Caco-2 (cell line): ENCODE measurements at regions of chr6 and their contacts with region 1.

Region 1: GRCh38 chr6:125153391-125154117 is at the start of gene TPD52L1:
- DNase-seq: peak; percentile 85
- H3K4me3 ChIP-seq: peak within 1 kb of the TSS; percentile 78
- H3K4me3 Mint-ChIP-seq: peak within 1 kb of the TSS; percentile 81
- H3K27ac Mint-ChIP-seq: peak within 1 kb of the TSS; percentile 42
- H3K4me1 ChIP-seq: no peaks in the 10 kb centered on the region
- H3K4me1 Mint-ChIP-seq: peaks cover 6% of the 10 kb centered on the region
- H3K27me3 ChIP-seq: no peaks in the 10 kb centered on the region
- H3K27me3 Mint-ChIP-seq: peaks cover 8% of the 10 kb centered on the region
- CTCF ChIP-seq: peak; percentile 79 to 97
- total RNA-seq, gene TPD52L1: 60.1 and 83.9 TPM in 2 replicates

Region 2: DNA sequence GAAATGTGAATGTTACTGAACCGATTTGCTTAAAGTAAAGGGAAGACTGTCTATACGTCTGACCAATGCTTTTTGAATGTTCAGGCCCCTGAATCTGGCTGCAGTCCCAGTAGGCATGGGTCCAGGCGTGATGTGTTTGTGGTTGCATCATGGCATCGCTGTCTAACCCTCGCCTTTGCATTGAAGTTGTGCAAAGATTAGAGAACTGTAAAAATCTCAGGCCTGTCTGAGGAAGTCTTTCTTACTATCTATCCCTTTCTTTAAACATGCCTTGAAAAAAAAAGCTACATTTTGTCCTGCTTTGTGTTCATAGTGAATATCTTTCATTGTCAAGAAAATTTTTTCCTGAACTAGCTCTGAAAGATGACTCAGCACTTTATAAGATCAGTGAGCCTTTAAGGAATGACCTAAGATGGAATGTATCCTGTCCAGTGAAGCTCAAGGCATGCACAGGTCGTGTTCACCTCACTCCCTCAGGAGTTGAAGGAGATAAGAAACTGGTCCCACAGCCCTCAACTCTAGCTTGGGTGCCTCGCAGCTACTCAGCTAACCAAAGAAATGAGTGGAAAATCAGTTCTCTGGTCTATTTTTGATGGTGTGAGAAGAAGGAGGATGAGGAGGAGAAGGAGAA is 48.5 kb after region 1 on chr6:
- CTCF ChIA-PET with region 1: interaction called, 7 read pairs
- POLR2A ChIA-PET with region 1: interaction called, 4 read pairs
- intact Hi-C with region 1: loop called (anchors 2 kb)
- DNase-seq: peak; percentile 59 to 81
- H3K4me3 ChIP-seq: no peak overlapping the region
- H3K4me3 Mint-ChIP-seq: peak overlapping the region; percentile 25
- H3K27ac Mint-ChIP-seq: peak overlapping the region; percentile 55
- H3K4me1 ChIP-seq: peaks cover 36% of the 10 kb centered on the region
- H3K4me1 Mint-ChIP-seq: peaks cover 25% of the 10 kb centered on the region
- H3K27me3 ChIP-seq: no peaks in the 10 kb centered on the region
- H3K27me3 Mint-ChIP-seq: no peaks in the 10 kb centered on the region
- CTCF ChIP-seq: no peak

Region 3: DNA sequence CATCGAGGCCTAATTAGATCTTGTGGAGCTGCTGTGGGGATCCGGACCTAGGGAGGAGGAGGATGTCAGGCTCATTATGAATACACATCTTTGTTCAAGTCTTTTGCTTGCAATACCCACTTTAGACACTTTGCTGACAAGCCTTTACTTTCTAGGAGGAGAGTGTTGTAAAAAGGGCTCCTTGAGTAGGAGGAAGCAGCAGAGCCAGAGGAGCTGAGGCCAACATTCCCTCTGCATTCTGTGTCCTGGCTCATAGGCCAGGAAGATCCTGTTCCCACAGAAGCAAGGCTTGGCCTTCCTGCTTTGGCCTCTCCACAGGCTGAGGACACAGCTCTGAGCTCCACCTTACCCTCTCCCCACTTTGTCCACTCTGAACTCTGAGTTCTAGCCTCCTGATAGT is 67.2 kb after region 1 on chr6:
- CTCF ChIA-PET with region 1: interaction called, 3 read pairs
- POLR2A ChIA-PET with region 1: no interaction called
- intact Hi-C with region 1: loop called (anchors 5 kb)
- DNase-seq: no peak
- H3K4me3 ChIP-seq: peak overlapping the region; percentile 4
- H3K4me3 Mint-ChIP-seq: peak overlapping the region; percentile 25
- H3K27ac Mint-ChIP-seq: no peak overlapping the region
- H3K4me1 ChIP-seq: peaks cover 24% of the 10 kb centered on the region
- H3K4me1 Mint-ChIP-seq: peaks cover 30% of the 10 kb centered on the region
- H3K27me3 ChIP-seq: no peaks in the 10 kb centered on the region
- H3K27me3 Mint-ChIP-seq: no peaks in the 10 kb centered on the region
- CTCF ChIP-seq: no peak

Region 4: DNA sequence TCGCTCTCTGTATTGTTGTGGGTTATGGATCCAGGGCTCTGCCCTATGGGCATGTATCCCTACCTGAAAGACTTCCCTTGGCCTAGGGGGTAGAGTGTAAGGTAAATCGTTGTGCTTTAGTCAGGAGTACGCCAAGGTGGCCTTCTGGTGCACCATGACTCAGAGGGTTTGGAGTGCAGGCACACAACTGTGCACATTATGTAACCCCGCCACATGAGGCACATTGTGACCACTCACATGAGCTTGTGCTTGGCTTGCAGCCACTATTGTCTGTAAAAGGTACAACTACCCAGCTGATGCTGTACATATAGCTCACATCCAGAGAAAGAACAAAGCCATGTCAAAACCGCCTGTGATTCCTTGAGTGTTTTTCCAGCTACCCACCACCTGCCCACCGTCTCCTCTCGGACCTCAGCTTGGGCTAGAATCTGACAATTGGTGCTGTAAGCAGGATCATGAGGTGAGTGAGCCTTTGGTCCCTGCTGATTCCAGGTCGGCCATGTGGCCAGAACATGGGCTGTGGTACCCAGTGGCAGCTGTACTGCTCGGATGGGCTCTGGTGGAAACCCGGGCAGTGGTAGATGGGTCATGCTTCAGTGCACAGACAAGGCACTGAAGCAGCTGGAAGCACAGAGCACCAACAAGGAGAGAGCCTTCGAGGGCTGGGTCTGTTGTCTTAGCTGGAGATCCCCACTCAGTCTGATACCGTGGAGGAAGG is 114.4 kb after region 1 on chr6:
- CTCF ChIA-PET with region 1: no interaction called
- POLR2A ChIA-PET with region 1: interaction called, 3 read pairs
- intact Hi-C with region 1: loop called (anchors 5 kb)
- DNase-seq: no peak
- H3K4me3 ChIP-seq: no peak overlapping the region
- H3K4me3 Mint-ChIP-seq: no peak overlapping the region
- H3K27ac Mint-ChIP-seq: no peak overlapping the region
- H3K4me1 ChIP-seq: no peaks in the 10 kb centered on the region
- H3K4me1 Mint-ChIP-seq: no peaks in the 10 kb centered on the region
- H3K27me3 ChIP-seq: no peaks in the 10 kb centered on the region
- H3K27me3 Mint-ChIP-seq: no peaks in the 10 kb centered on the region
- CTCF ChIP-seq: no peak

Region 5: DNA sequence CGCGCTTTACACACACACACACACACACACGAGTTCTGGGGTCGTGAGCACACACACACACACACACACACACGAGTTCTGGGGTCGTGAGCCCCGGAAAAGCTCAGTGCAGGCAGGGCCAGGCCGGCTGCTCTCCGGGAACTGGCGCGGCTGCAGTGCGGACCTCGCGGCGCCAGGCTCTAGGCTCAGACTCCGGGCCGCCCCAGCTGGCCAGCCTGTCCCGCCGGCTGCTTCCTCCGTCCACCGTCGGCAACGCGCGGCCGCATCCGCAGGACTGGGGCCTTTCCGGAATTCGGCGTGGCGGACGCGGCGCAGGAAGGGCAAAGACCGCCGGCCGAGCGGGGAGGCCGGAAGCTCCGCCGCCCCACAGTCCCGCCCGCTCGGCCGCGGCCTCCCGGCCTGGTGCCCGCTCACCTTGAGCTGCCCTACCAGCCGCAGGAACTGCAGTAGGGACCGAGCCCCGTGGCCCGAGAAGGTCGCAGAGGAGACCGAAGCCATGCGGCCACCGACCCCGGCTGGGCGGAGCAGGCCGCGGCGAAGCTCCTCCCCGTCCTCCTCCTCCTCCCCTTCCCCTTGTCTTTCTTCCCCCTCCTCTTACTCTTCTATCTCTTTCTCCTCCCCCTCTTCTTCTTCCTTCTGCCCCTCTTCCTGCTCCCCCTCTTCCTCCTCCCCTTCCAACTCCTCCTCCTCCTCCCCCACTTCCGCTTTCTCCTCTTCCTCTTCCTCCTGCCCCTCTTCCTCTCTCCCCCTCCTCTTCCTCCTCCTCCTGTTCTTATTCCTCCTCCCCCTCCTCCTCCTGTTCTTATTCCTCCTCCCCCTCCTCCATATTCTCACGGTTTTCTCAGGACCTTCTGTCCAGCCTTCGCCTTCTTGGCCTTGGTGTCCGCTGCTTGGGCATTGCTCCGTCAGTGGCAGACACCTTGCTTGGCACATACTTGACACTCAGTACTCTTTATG is 148.2 kb after region 1 on chr6 and contains the start of gene HDDC2:
- CTCF ChIA-PET with region 1: no interaction called
- POLR2A ChIA-PET with region 1: no interaction called
- intact Hi-C with region 1: loop called (anchors 2 kb)
- DNase-seq: peak; percentile 72 to 81
- H3K4me3 ChIP-seq: peak within 1 kb of the TSS; percentile 64
- H3K4me3 Mint-ChIP-seq: peak within 1 kb of the TSS; percentile 90
- H3K27ac Mint-ChIP-seq: peak within 1 kb of the TSS; percentile 88
- H3K4me1 ChIP-seq: peaks cover 12% of the 10 kb centered on the region
- H3K4me1 Mint-ChIP-seq: peaks cover 23% of the 10 kb centered on the region
- H3K27me3 ChIP-seq: no peaks in the 10 kb centered on the region
- H3K27me3 Mint-ChIP-seq: no peaks in the 10 kb centered on the region
- CTCF ChIP-seq: no peak
- total RNA-seq, gene HDDC2: 62.1 and 66.5 TPM in 2 replicates

Region 6: GRCh38 chr6:125765944-125766343 is 612.4 kb after region 1 on chr6:
- CTCF ChIA-PET with region 1: no interaction called
- POLR2A ChIA-PET with region 1: no interaction called
- intact Hi-C with region 1: loop called (anchors 2 kb)
- DNase-seq: no peak
- H3K4me3 ChIP-seq: no peak overlapping the region
- H3K4me3 Mint-ChIP-seq: no peak overlapping the region
- H3K27ac Mint-ChIP-seq: no peak overlapping the region
- H3K4me1 ChIP-seq: no peaks in the 10 kb centered on the region
- H3K4me1 Mint-ChIP-seq: no peaks in the 10 kb centered on the region
- H3K27me3 ChIP-seq: no peaks in the 10 kb centered on the region
- H3K27me3 Mint-ChIP-seq: peaks cover 3% of the 10 kb centered on the region
- CTCF ChIP-seq: no peak